ENCODE measurements at regions of chr2 and their contacts with region 1.

Region 1: GRCh38 chr2:70104231-70105111 is 17.2 kb downstream of the PCBP1 start:
- DNase-seq: peak; percentile 66 to 68
- H3K4me3 ChIP-seq: no peak overlapping the region
- H3K4me3 Mint-ChIP-seq: peak overlapping the region; percentile 47
- H3K27ac Mint-ChIP-seq: peak overlapping the region; percentile 68
- H3K4me1 ChIP-seq: peaks cover 30% of the 10 kb centered on the region
- H3K4me1 Mint-ChIP-seq: peaks cover 20% of the 10 kb centered on the region
- H3K27me3 ChIP-seq: no peaks in the 10 kb centered on the region
- H3K27me3 Mint-ChIP-seq: no peaks in the 10 kb centered on the region
- CTCF ChIP-seq: no peak

Region 2: DNA sequence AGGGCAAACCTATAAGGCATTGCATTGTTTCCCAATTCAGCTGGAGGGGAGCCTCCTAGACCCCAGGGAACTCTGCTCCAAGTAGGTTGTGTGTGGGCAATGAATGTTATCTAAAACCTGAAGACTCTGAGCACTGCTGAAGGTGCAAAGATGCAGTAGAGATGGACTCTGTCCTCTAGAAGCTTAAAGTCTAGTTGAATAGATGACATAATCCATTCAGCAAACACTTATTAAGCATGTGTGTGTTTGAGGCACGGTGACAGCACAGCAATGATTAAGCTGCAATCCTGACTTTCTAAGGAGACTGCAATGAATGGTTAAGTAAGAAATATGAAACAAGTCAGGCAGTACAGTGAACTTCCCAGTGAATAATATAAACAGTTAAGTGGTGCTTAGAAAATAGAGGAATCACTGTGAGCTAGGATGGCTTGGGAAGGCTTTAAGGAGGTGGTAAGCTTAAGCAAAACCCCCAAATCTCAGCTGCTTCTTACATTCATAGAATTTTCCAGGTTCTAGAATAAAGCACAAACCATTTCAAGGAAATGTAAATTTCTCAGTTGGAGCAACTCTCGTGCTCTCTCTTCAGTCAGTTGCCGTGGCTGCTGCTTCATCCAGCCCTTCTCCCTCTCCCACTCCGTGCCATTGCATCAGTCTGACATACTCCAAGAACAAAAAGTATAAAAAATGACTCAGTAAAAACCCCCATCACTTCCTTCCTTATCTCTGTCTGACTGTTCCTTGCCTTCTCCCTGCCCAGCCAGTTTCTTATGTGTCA is 170.4 kb before region 1 on chr2:
- CTCF ChIA-PET with region 1: no interaction called
- POLR2A ChIA-PET with region 1: no interaction called
- intact Hi-C with region 1: no loop called
- DNase-seq: peak; percentile 52 to 56
- H3K4me3 ChIP-seq: no peak overlapping the region
- H3K4me3 Mint-ChIP-seq: peak overlapping the region; percentile 58
- H3K27ac Mint-ChIP-seq: peak overlapping the region; percentile 82
- H3K4me1 ChIP-seq: peaks cover 23% of the 10 kb centered on the region
- H3K4me1 Mint-ChIP-seq: peaks cover 31% of the 10 kb centered on the region
- H3K27me3 ChIP-seq: no peaks in the 10 kb centered on the region
- H3K27me3 Mint-ChIP-seq: no peaks in the 10 kb centered on the region
- CTCF ChIP-seq: no peak

Region 3: GRCh38 chr2:70124983-70125480 is 20.6 kb after region 1 on chr2:
- CTCF ChIA-PET with region 1: interaction called, 4 read pairs
- POLR2A ChIA-PET with region 1: interaction called, 39 read pairs
- intact Hi-C with region 1: loop called (anchors 1 kb)
- DNase-seq: peak; percentile 72 to 76
- H3K4me3 ChIP-seq: peak overlapping the region; percentile 84
- H3K4me3 Mint-ChIP-seq: peak overlapping the region; percentile 91
- H3K27ac Mint-ChIP-seq: peak overlapping the region; percentile 99
- H3K4me1 ChIP-seq: peaks cover 29% of the 10 kb centered on the region
- H3K4me1 Mint-ChIP-seq: peaks cover 35% of the 10 kb centered on the region
- H3K27me3 ChIP-seq: no peaks in the 10 kb centered on the region
- H3K27me3 Mint-ChIP-seq: no peaks in the 10 kb centered on the region
- CTCF ChIP-seq: no peak

Region 4: GRCh38 chr2:70381831-70382267 is 277.4 kb after region 1 on chr2:
- CTCF ChIA-PET with region 1: no interaction called
- POLR2A ChIA-PET with region 1: no interaction called
- intact Hi-C with region 1: no loop called
- DNase-seq: no peak
- H3K4me3 ChIP-seq: no peak overlapping the region
- H3K4me3 Mint-ChIP-seq: no peak overlapping the region
- H3K27ac Mint-ChIP-seq: no peak overlapping the region
- H3K4me1 ChIP-seq: no peaks in the 10 kb centered on the region
- H3K4me1 Mint-ChIP-seq: no peaks in the 10 kb centered on the region
- H3K27me3 ChIP-seq: no peaks in the 10 kb centered on the region; the same call in 1 of the 2 replicates
- H3K27me3 Mint-ChIP-seq: peaks cover 12% of the 10 kb centered on the region
- CTCF ChIP-seq: no peak